ENCODE measurements at regions of chr9 and their contacts with region 1.

Region 1: DNA sequence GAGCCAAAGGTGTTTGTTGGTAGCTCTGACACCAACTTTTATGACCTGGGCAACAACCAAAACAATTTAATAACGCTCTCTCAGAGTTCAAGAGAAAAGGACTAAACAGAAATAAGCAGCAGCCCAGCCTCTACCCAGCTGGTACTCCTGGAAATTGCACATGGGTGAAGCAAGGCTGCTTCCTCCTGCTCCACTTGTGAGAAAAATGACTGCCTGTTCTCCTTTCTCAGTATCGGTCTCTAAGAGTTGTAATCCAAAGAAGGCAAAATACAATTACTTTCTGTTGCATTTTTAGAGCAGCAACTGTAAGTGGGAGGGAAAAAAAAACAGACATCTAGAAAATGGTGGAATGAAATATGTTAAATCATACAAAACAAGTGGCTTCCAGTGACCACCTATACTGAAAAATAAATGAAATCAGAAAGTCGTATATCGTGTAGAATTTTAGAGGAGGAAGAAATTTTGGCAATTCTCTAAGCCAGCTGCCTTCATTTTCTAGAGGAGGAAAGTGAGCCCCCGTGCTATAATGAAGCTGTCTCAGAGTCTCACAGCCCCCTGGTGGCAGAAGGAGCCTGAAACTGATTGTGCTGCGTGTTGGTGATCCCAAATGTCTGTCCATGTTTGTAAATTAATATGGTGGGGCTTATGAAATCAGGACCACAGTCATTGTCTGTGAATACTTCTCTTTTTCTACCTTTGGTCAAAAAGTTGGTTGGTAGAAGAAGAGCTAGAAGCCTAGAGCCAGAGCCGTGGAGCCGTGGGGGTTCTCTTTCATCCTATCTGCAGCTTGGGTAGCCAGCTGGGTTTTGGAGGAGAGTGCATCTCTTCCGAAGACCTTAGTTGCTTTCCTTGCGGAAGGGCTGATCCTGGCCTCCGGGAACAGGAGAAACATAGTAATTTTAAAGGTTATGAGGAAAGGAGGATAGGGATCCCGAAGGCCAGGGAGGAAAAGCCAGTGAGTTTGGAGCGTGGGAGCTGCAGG is 139.9 kb downstream of the PIP5K1B start:
- DNase-seq: peak; percentile 54 to 64 (median 60)
- H3K4me3 ChIP-seq: peak overlapping the region; percentile 13 to 87 (median 75)
- H3K4me3 Mint-ChIP-seq: peak overlapping the region; percentile 71 to 91
- H3K27ac ChIP-seq: peak overlapping the region; percentile 54 to 87
- H3K27ac Mint-ChIP-seq: peak overlapping the region; percentile 87 to 96 (median 95)
- H3K4me1 ChIP-seq: peaks cover 34 to 50% of the 10 kb centered on the region in 2 donors
- H3K4me1 Mint-ChIP-seq: peaks cover 48% of the 10 kb centered on the region
- H3K27me3 ChIP-seq: no peaks in the 10 kb centered on the region
- H3K27me3 Mint-ChIP-seq: no peaks in the 10 kb centered on the region
- CTCF ChIP-seq: peak; percentile 68

Region 2: DNA sequence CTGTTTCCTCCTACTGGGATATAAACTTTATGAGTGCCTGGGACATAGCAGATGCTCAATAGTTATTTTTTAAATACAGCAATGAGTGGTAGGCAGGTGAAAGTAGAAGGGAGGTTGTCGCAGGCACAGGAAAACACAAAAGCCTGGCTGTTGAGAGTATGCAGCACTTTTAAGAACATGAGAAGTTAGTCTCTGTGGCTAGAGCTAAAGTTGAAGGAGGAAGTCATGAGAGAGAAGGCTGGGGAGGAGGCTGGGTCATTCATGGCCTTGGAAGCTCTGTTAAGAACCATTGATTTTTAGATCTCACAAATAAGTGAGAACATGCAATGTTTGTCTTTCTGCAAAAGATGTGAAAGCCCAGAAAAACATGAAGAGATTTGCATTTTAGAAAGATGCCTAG is 42.3 kb after region 1 on chr9:
- intact Hi-C with region 1: no loop called
- DNase-seq: no peak
- H3K4me3 ChIP-seq: no peak overlapping the region
- H3K4me3 Mint-ChIP-seq: no peak overlapping the region
- H3K27ac ChIP-seq: no peak overlapping the region
- H3K27ac Mint-ChIP-seq: peak overlapping the region in 1 of 7 donors; percentile 0
- H3K4me1 ChIP-seq: no peaks in the 10 kb centered on the region
- H3K4me1 Mint-ChIP-seq: peaks cover 12% of the 10 kb centered on the region
- H3K27me3 ChIP-seq: no peaks in the 10 kb centered on the region
- H3K27me3 Mint-ChIP-seq: no peaks in the 10 kb centered on the region
- CTCF ChIP-seq: no peak

Region 3: DNA sequence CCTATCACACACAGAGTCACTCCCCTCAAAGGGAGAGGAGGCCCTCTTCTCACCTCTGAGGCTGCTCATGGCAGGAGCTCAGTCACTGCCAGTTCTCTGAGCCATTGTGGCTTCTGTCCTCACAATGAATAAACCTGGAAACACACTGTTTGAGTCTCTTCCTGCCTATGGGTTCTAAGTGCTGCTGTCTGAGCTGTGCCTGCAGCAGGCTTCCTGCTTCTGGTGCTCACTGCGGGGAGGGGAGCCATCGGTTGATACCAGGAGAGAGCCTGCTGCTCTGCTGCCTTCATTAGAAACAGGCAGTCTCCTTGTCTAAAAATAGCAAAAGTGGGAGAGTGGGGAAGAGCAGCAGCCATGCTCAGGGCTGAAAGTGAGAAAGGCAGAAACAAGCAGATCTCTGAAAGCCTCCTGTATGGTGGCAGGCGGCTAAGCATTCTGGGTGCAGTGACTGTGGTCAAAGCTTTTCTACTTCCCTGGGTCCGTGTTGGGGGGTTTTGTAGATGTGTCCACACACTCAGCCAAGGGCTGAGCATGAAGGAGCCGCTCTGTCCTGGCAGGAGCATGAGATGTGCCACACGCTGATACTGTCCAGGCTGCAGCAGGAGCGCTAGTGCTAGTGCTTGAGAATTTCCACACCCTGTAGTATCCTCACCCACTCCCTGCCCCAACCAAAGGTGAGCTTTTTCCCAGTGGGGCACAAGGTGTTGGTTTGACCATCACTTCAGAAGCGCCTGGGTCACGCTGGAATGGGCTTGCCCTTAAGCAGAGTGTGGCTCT is 134.8 kb after region 1 on chr9:
- intact Hi-C with region 1: loop called in 1 of 2 experiments (anchors 5 kb)
- DNase-seq: no peak
- H3K4me3 ChIP-seq: peak overlapping the region in 1 of 3 experiments; percentile 6
- H3K4me3 Mint-ChIP-seq: peak overlapping the region; percentile 37 to 61
- H3K27ac ChIP-seq: peak overlapping the region; percentile 33 to 69
- H3K27ac Mint-ChIP-seq: peak overlapping the region in 5 of 7 donors; percentile 66 to 86 (median 78)
- H3K4me1 ChIP-seq: peaks cover 69 to 71% of the 10 kb centered on the region in 2 donors
- H3K4me1 Mint-ChIP-seq: peaks cover 74% of the 10 kb centered on the region
- H3K27me3 ChIP-seq: no peaks in the 10 kb centered on the region
- H3K27me3 Mint-ChIP-seq: peaks cover 0 to 2% (median 0%) of the 10 kb centered on the region in 3 donors
- CTCF ChIP-seq: no peak